Psoas muscle (tissue), 8 donors: ENCODE measurements at regions of chr5 and their contacts with region 1.

Region 1: DNA sequence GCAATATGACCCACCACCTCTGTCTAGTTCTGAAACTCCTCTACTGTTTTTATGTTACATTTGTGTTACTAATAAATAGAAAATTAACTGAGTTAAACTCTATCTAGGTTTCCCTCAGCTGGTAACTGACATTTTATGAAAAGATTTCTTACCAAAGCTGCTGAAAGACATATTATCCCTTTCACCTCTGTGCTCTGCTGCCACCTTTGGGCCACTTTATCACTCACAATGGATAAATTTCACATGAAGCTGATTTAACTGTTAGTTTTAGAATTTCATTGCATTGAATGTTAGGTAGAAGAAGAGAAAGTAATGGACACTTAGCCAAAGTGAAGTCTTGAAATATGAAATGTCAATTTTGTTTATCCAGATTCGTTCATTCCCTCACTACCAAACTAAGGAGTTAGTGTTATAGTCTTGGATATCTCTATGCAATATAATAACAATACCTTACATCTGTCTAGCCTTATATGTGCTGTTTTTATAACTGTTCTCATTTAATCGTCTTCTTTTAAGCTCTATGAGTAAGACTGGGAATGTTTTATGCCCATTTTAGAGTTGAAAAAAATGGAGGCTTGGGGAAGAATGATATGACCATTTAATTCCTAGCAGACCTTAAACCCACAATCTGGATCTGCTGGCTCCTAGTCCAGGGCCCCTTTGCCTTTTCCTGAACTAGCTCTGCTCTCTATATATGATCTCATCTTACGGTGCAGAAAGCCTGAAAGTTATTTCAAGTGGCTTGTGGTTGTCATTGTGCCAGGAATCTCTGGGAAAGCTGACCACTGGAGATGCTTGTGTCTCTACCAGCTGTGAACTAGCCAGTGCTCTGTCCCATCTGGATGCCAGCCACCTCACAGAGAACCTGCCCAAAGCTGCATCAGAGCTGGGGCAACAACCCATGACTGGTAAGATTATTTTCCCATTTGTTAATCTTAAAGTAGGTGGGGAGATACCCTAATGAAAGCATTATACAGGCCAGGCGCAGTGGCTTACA is 97.1 kb downstream of the GOLPH3 start:
- DNase-seq: peak in 1 of 2 donors; percentile 39
- ATAC-seq: peak; percentile 87 to 95 (median 88)
- H3K4me3 ChIP-seq: no peak overlapping the region
- H3K27ac ChIP-seq: no peak overlapping the region
- H3K4me1 ChIP-seq: peaks cover 8% of the 10 kb centered on the region
- H3K27me3 ChIP-seq: no peaks in the 10 kb centered on the region
- CTCF ChIP-seq: peak; percentile 79

Region 2: GRCh38 chr5:31825518-31826068 is 251.4 kb before region 1 on chr5:
- intact Hi-C with region 1: loop called (anchors 2 to 5 kb)
- DNase-seq: peak in 1 of 2 donors; percentile 17
- ATAC-seq: peak; percentile 60 to 81 (median 78)
- H3K4me3 ChIP-seq: no peak overlapping the region
- H3K27ac ChIP-seq: no peak overlapping the region
- H3K4me1 ChIP-seq: no peaks in the 10 kb centered on the region
- H3K27me3 ChIP-seq: no peaks in the 10 kb centered on the region
- CTCF ChIP-seq: peak; percentile 73

Region 3: DNA sequence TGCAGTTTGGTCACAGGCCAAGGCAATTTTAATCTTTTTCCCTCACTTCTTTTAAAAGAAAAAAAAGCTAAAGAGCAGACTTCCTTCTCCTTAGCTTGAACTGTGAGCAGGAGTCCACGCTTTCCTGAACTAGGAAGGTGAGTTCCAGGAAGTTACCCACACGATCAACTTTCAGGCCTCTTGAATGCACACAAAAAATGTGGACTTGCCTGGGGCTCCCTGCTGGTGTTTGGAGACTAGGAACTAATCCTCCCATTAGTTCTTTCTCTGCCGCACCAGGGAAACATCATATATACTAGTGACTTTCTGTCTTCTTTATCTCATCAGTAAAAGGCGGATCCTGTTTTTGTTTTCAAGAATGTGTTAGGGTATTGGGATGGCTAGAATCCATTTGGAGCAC is 142.8 kb before region 1 on chr5:
- intact Hi-C with region 1: loop called (anchors 5 kb)
- DNase-seq: no peak
- ATAC-seq: no peak
- H3K4me3 ChIP-seq: no peak overlapping the region
- H3K27ac ChIP-seq: no peak overlapping the region
- H3K4me1 ChIP-seq: no peaks in the 10 kb centered on the region
- H3K27me3 ChIP-seq: no peaks in the 10 kb centered on the region
- CTCF ChIP-seq: no peak

Region 4: GRCh38 chr5:32027717-32028321 is 49.2 kb before region 1 on chr5:
- intact Hi-C with region 1: loop called in 1 of 2 experiments (anchors 5 kb)
- DNase-seq: peak; percentile 60 to 67
- ATAC-seq: peak; percentile 91 to 96 (median 94)
- H3K4me3 ChIP-seq: peak overlapping the region; percentile 26
- H3K27ac ChIP-seq: peak overlapping the region; percentile 68
- H3K4me1 ChIP-seq: peaks cover 36% of the 10 kb centered on the region
- H3K27me3 ChIP-seq: no peaks in the 10 kb centered on the region
- CTCF ChIP-seq: no peak

Region 5: DNA sequence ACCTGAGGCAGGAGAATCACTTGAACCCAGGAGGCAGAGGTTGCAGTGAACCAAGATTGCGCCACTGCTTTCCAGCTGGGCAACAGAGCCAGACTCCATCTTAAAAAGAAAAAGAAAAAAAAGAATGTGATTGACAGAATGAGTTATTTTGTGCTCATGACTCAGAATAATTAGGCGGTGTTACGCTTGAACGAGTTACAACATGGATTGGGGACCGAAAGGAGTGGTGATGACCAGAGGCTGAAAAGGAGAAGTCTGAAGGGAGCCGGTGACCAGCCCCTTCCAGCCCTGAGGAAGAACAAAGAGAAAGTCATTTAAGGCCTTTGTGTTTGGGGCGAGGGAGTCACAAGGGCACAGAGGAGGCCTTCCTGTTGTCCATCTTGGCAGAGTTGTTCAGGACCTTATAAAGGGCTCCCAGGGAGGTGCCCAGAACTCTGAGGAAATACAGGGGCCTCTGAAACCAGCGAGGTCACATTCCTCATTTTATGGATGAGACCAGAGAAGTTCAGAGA is 34.5 kb before region 1 on chr5:
- intact Hi-C with region 1: no loop called
- DNase-seq: no peak
- ATAC-seq: no peak
- H3K4me3 ChIP-seq: no peak overlapping the region
- H3K27ac ChIP-seq: no peak overlapping the region
- H3K4me1 ChIP-seq: no peaks in the 10 kb centered on the region
- H3K27me3 ChIP-seq: no peaks in the 10 kb centered on the region
- CTCF ChIP-seq: no peak